Tibial artery (tissue), 4 donors: ENCODE measurements at regions of chr3 and their contacts with region 1.

Region 1: DNA sequence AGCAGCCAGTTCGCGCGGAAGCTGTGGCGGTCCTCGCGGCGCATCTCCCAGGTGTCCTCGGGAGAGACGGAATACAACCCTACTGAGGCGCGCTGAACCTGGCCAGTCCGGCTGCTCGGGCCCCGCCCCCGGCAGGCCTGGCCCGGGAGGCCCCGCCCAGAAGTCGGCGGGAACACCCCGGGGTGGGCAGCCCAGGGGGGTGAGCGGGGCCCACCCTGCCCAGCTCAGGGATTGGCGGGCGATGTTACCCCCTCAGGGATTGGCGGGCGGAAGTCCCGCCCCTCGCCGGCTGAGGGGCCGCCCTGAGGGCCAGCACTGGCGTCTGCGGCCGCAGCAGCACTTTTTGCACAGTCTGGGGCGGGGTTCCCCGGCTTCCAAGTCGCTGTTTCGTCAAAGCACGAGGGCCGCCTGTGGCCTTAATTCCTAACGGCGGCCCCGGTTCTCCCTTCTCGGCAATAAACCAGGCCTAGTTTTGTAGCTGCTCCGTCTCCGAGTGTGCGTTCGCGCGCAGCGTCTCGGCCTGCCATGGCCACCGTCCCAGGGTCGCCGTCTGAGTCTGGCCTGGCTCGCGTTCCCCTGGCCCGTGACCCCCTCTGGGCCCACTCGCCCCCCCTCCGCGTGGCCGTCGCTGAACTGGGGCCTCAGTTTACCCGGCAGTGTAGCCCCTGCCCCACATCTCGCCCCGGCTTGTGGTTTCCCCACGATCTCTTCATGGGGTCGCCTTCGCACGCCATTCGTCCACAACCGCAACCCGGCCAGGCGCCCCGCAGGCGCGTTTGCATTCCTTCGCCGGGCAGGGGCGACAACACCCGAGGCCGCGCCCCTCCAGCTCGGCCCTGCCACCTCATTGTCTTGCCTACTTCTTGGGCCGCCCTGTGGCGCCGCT is 30.0 kb downstream of the NBEAL2 start:
- DNase-seq: peak; percentile 89 to 97
- H3K4me3 ChIP-seq: peak overlapping the region; percentile 60 to 81
- H3K27ac ChIP-seq: peak overlapping the region; percentile 91
- H3K4me1 ChIP-seq: peaks cover 4 to 15% (median 12%) of the 10 kb centered on the region in 4 donors
- H3K27me3 ChIP-seq: no peaks in the 10 kb centered on the region
- CTCF ChIP-seq: peak in 1 of 2 experiments; percentile 15

Region 2: GRCh38 chr3:47282424-47283192 is 273.1 kb after region 1 on chr3 and contains the starts of genes KIF9 and KLHL18:
- intact Hi-C with region 1: loop called (anchors 10 kb)
- DNase-seq: peak; percentile 94 to 95
- H3K4me3 ChIP-seq: peak within 1 kb of the TSS; percentile 68 to 77
- H3K27ac ChIP-seq: peak within 1 kb of the TSS; percentile 77 to 89
- H3K4me1 ChIP-seq: peaks cover 7 to 41% (median 35%) of the 10 kb centered on the region in 4 donors
- H3K27me3 ChIP-seq: no peaks in the 10 kb centered on the region
- CTCF ChIP-seq: peak in 1 of 2 experiments; percentile 4

Region 3: DNA sequence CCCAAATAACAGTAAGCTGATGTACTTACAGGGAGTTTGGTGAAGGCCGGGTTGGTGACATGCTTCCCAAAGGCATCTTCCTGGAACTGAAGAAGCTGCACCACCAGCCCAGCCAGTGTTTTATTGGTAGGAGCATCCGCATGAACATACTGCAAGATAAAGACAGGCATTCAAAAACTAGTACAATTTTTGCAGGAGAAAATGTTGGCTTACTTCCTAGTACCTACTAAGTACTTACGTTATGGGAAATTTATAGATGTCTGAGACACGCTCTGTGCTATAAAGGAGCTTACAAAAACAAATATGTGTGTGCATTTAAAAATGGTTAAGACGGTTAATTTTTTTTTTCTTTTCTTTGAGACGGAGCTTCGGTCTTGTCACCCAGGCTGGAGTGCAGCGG is 763.3 kb after region 1 on chr3:
- intact Hi-C with region 1: no loop called
- DNase-seq: peak in 1 of 2 donors; percentile 29
- H3K4me3 ChIP-seq: no peak overlapping the region
- H3K27ac ChIP-seq: no peak overlapping the region
- H3K4me1 ChIP-seq: peaks cover 0 to 16% (median 0%) of the 10 kb centered on the region in 4 donors
- H3K27me3 ChIP-seq: no peaks in the 10 kb centered on the region
- CTCF ChIP-seq: no peak